PC-9 (cell line): ENCODE measurements at regions of chr9 and their contacts with region 1.

Region 1: GRCh38 chr9:128688512-128689292 is at the start of gene SET:
- DNase-seq: peak; percentile 71 to 98
- H3K4me3 ChIP-seq: peak within 1 kb of the TSS; percentile 80
- H3K27ac ChIP-seq: peak within 1 kb of the TSS; percentile 78
- H3K4me1 ChIP-seq: peaks cover 47% of the 10 kb centered on the region
- H3K27me3 ChIP-seq: no peaks in the 10 kb centered on the region
- CTCF ChIP-seq: no peak
- total RNA-seq, gene SET: 539 and 738 TPM in 2 replicates

Region 2: DNA sequence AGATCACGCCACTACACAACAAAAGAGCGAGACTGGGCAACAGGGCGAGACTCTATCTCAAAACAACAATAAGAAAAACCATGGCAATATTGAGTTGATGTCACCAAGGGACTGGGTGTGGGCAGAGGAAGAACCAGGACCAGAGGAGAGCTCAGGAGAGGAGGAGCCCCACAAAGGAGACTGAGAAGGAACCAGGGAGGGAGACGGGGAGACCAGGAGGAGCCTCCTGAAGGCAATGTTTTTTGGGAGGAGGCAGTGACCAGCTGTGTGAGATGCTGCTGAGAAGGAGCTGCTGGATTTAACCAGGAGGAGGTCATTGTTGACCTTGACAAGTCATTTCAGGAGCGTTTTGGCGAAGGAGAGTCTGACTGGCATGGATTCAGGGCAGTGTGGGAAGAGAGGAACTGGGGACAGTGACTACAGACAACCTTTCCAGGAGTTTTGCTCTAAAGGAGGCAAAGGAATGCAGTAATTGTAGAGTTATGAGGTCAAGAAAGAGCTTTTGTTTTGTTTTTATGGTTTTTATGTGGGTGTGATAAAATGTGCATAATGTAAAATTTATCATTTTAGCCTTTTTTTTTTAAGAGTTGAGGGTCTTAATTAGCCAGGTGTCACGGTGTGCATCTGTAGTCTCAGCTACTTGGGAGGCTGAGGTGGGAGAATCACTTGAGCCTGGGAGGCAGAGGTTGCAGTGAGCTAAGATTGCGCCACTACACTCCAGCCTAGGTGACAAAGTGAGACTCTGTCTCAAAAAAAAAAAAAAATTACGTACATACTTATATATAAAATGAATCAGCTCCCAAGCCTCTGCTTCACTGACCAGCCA is 384.3 kb before region 1 on chr9:
- CTCF ChIA-PET with region 1: no interaction called
- POLR2A ChIA-PET with region 1: no interaction called
- intact Hi-C with region 1: no loop called
- DNase-seq: peak; percentile 6 to 56
- H3K4me3 ChIP-seq: no peak overlapping the region
- H3K27ac ChIP-seq: peak overlapping the region; percentile 97
- H3K4me1 ChIP-seq: peaks cover 65% of the 10 kb centered on the region
- H3K27me3 ChIP-seq: no peaks in the 10 kb centered on the region
- CTCF ChIP-seq: no peak

Region 3: GRCh38 chr9:128455849-128456612 is 232.7 kb before region 1 on chr9 and contains the start of gene ODF2:
- CTCF ChIA-PET with region 1: no interaction called
- POLR2A ChIA-PET with region 1: no interaction called
- intact Hi-C with region 1: loop called (anchors 5 kb)
- DNase-seq: peak; percentile 83 to 99
- H3K4me3 ChIP-seq: peak within 1 kb of the TSS; percentile 90
- H3K27ac ChIP-seq: no peak within 1 kb of the TSS
- H3K4me1 ChIP-seq: 0 out of 2 replicates have a peak, but pooled peaks cover 6% of the 10 kb centered on the region
- H3K27me3 ChIP-seq: no peaks in the 10 kb centered on the region
- CTCF ChIP-seq: no peak
- total RNA-seq, gene ODF2: 49.4 and 58.2 TPM in 2 replicates

Region 4: GRCh38 chr9:128656416-128657343 is 32.0 kb before region 1 on chr9 and contains the start of gene DYNC2I2:
- CTCF ChIA-PET with region 1: interaction called, 3 read pairs
- POLR2A ChIA-PET with region 1: interaction called, 3 read pairs
- intact Hi-C with region 1: loop called (anchors 1 kb)
- DNase-seq: peak; percentile 80 to 97
- H3K4me3 ChIP-seq: peak within 1 kb of the TSS; percentile 99
- H3K27ac ChIP-seq: peak within 1 kb of the TSS; percentile 98
- H3K4me1 ChIP-seq: peaks cover 8% of the 10 kb centered on the region; the same call in 1 of the 2 replicates
- H3K27me3 ChIP-seq: no peaks in the 10 kb centered on the region
- CTCF ChIP-seq: no peak
- total RNA-seq, gene DYNC2I2: 225 and 263 TPM in 2 replicates

Region 5: GRCh38 chr9:128669786-128670185 is 18.9 kb before region 1 on chr9:
- CTCF ChIA-PET with region 1: interaction called, 5 read pairs
- POLR2A ChIA-PET with region 1: interaction called, 11 read pairs
- intact Hi-C with region 1: loop called (anchors 1 kb)
- DNase-seq: no peak
- H3K4me3 ChIP-seq: no peak overlapping the region
- H3K27ac ChIP-seq: no peak overlapping the region
- H3K4me1 ChIP-seq: peaks cover 11% of the 10 kb centered on the region
- H3K27me3 ChIP-seq: no peaks in the 10 kb centered on the region
- CTCF ChIP-seq: no peak

Region 6: DNA sequence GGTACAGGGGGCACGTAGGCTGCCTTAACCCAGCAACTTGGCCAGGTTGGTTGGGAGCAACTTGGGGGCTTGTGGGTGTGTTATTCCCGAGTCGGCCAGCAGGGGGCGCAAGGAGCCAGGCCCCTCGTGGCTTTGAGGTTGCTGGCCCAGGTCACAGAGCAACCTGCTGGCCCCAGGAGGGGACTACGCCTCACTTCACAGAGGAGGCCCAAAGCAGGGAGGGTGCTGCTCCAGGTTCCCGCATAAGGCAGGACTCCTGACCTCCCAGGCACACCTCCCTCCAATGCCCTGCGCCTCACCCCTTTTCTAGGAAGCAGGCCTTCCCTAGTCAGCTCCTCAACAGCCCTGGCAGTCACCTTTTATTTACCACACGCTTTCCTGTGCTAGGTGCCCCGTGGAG is 174.9 kb after region 1 on chr9:
- CTCF ChIA-PET with region 1: no interaction called
- POLR2A ChIA-PET with region 1: no interaction called
- intact Hi-C with region 1: no loop called
- DNase-seq: peak; percentile 70 to 85
- H3K4me3 ChIP-seq: no peak overlapping the region
- H3K27ac ChIP-seq: no peak overlapping the region
- H3K4me1 ChIP-seq: peaks cover 37% of the 10 kb centered on the region
- H3K27me3 ChIP-seq: no peaks in the 10 kb centered on the region
- CTCF ChIP-seq: peak; percentile 96